B cell (primary cell): ENCODE measurements at regions of chr1 and their contacts with region 1.

Region 1: GRCh38 chr1:54810100-54810942 is 9.2 kb upstream of the TTC22 start:
- DNase-seq: peak; percentile 66
- ATAC-seq: peak; percentile 82
- H3K4me3 ChIP-seq: no peak overlapping the region
- H3K4me3 Mint-ChIP-seq: no peak overlapping the region
- H3K27ac ChIP-seq: no peak overlapping the region
- H3K27ac Mint-ChIP-seq: no peak overlapping the region
- H3K4me1 ChIP-seq: no peaks in the 10 kb centered on the region
- H3K4me1 Mint-ChIP-seq: no peaks in the 10 kb centered on the region
- H3K27me3 ChIP-seq: no peaks in the 10 kb centered on the region
- H3K27me3 Mint-ChIP-seq: no peaks in the 10 kb centered on the region
- CTCF ChIP-seq: peak; percentile 88

Region 2: GRCh38 chr1:53860967-53861411 is 949.3 kb before region 1 on chr1:
- CTCF ChIA-PET with region 1: interaction called, 3 read pairs
- POLR2A ChIA-PET with region 1: no interaction called
- intact Hi-C with region 1: loop called (anchors 1 kb)
- DNase-seq: peak; percentile 70
- ATAC-seq: peak; percentile 62
- H3K4me3 ChIP-seq: no peak overlapping the region
- H3K4me3 Mint-ChIP-seq: no peak overlapping the region
- H3K27ac ChIP-seq: no peak overlapping the region
- H3K27ac Mint-ChIP-seq: no peak overlapping the region
- H3K4me1 ChIP-seq: peaks cover 10 to 15% of the 10 kb centered on the region in 2 donors
- H3K4me1 Mint-ChIP-seq: peaks cover 23% of the 10 kb centered on the region
- H3K27me3 ChIP-seq: no peaks in the 10 kb centered on the region
- H3K27me3 Mint-ChIP-seq: no peaks in the 10 kb centered on the region
- CTCF ChIP-seq: peak; percentile 90

Region 3: DNA sequence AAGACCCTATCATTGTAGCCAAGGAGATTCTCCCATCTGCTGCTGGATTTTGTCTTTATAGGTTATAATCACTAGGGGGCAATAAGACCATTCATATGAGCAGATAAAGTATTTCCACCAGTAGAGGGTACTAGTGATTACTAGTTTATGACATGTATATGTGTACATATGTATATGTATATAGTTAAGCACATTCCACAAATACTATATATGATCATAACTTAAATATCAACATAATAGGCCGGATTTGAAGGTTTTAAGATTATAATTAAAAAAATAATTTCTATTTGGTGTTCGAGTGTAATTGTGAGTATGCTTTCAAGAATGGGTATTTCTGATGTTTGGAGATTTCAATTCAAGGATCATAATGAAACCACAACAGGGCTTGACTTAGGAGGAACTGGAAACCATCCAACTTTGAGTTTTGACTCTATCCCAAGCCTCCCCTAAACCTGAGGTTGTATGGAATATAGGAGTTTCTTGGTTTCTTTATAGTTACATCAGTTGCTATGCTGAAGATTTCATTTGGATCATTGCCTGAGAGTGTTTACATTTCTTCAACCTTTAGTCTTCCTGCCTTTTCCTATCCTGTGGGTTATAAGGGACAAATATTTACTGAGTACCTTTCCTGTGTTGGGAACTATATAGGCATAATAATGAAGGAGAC is 740.0 kb before region 1 on chr1:
- CTCF ChIA-PET with region 1: interaction called, 11 read pairs
- POLR2A ChIA-PET with region 1: no interaction called
- intact Hi-C with region 1: loop called (anchors 1 kb)
- DNase-seq: peak; percentile 69
- ATAC-seq: peak; percentile 92
- H3K4me3 ChIP-seq: no peak overlapping the region
- H3K4me3 Mint-ChIP-seq: no peak overlapping the region
- H3K27ac ChIP-seq: no peak overlapping the region
- H3K27ac Mint-ChIP-seq: no peak overlapping the region
- H3K4me1 ChIP-seq: no peaks in the 10 kb centered on the region
- H3K4me1 Mint-ChIP-seq: no peaks in the 10 kb centered on the region
- H3K27me3 ChIP-seq: no peaks in the 10 kb centered on the region
- H3K27me3 Mint-ChIP-seq: no peaks in the 10 kb centered on the region
- CTCF ChIP-seq: peak; percentile 94

Region 4: GRCh38 chr1:54671985-54672608 is 138.2 kb before region 1 on chr1:
- CTCF ChIA-PET with region 1: interaction called, 11 read pairs
- POLR2A ChIA-PET with region 1: no interaction called
- intact Hi-C with region 1: no loop called
- DNase-seq: peak; percentile 51
- ATAC-seq: peak; percentile 56
- H3K4me3 ChIP-seq: no peak overlapping the region
- H3K4me3 Mint-ChIP-seq: no peak overlapping the region
- H3K27ac ChIP-seq: no peak overlapping the region
- H3K27ac Mint-ChIP-seq: no peak overlapping the region
- H3K4me1 ChIP-seq: no peaks in the 10 kb centered on the region
- H3K4me1 Mint-ChIP-seq: no peaks in the 10 kb centered on the region
- H3K27me3 ChIP-seq: no peaks in the 10 kb centered on the region
- H3K27me3 Mint-ChIP-seq: no peaks in the 10 kb centered on the region
- CTCF ChIP-seq: peak; percentile 69

Region 5: GRCh38 chr1:54774820-54775498 is 35.4 kb before region 1 on chr1:
- CTCF ChIA-PET with region 1: no interaction called
- POLR2A ChIA-PET with region 1: no interaction called
- intact Hi-C with region 1: no loop called
- DNase-seq: no peak
- ATAC-seq: no peak
- H3K4me3 ChIP-seq: no peak overlapping the region
- H3K4me3 Mint-ChIP-seq: no peak overlapping the region
- H3K27ac ChIP-seq: no peak overlapping the region
- H3K27ac Mint-ChIP-seq: no peak overlapping the region
- H3K4me1 ChIP-seq: no peaks in the 10 kb centered on the region
- H3K4me1 Mint-ChIP-seq: no peaks in the 10 kb centered on the region
- H3K27me3 ChIP-seq: no peaks in the 10 kb centered on the region
- H3K27me3 Mint-ChIP-seq: peaks cover 4% of the 10 kb centered on the region
- CTCF ChIP-seq: no peak

Region 6: GRCh38 chr1:54825696-54826095 is 15.4 kb after region 1 on chr1:
- CTCF ChIA-PET with region 1: no interaction called
- POLR2A ChIA-PET with region 1: no interaction called
- intact Hi-C with region 1: no loop called
- DNase-seq: no peak
- ATAC-seq: no peak
- H3K4me3 ChIP-seq: no peak overlapping the region
- H3K4me3 Mint-ChIP-seq: no peak overlapping the region
- H3K27ac ChIP-seq: no peak overlapping the region
- H3K27ac Mint-ChIP-seq: no peak overlapping the region
- H3K4me1 ChIP-seq: no peaks in the 10 kb centered on the region
- H3K4me1 Mint-ChIP-seq: no peaks in the 10 kb centered on the region
- H3K27me3 ChIP-seq: no peaks in the 10 kb centered on the region
- H3K27me3 Mint-ChIP-seq: peaks cover 27% of the 10 kb centered on the region
- CTCF ChIP-seq: no peak

Region 7: GRCh38 chr1:55658917-55659316 is 848.6 kb after region 1 on chr1:
- CTCF ChIA-PET with region 1: no interaction called
- POLR2A ChIA-PET with region 1: no interaction called
- intact Hi-C with region 1: no loop called
- DNase-seq: no peak
- ATAC-seq: no peak
- H3K4me3 ChIP-seq: no peak overlapping the region
- H3K4me3 Mint-ChIP-seq: no peak overlapping the region
- H3K27ac ChIP-seq: no peak overlapping the region
- H3K27ac Mint-ChIP-seq: no peak overlapping the region
- H3K4me1 ChIP-seq: no peaks in the 10 kb centered on the region
- H3K4me1 Mint-ChIP-seq: no peaks in the 10 kb centered on the region
- H3K27me3 ChIP-seq: no peaks in the 10 kb centered on the region
- H3K27me3 Mint-ChIP-seq: peaks cover 3% of the 10 kb centered on the region
- CTCF ChIP-seq: no peak